K562 (cell line): ENCODE measurements at regions of chr7 and their contacts with region 1.

Region 1: GRCh38 chr7:50335795-50336754 is 31.6 kb downstream of the IKZF1 start:
- DNase-seq: peak; percentile 79 to 89 (median 85)
- ATAC-seq: peak; percentile 50
- H3K4me3 ChIP-seq: no peak overlapping the region
- H3K27ac ChIP-seq: peak overlapping the region; percentile 74
- H3K4me1 ChIP-seq: peaks cover 58 to 97% of the 10 kb centered on the region in 2 experiments
- H3K27me3 ChIP-seq: no peaks in the 10 kb centered on the region; a peak in 1 of 5 replicates
- CTCF ChIP-seq: peak; percentile 15 to 25 (median 19); a peak in 2 of 6 replicates
- EP300 ChIP-seq: no peak
- POLR2A ChIP-seq: no peak
- RAD21 ChIP-seq: no peak

Region 2: GRCh38 chr7:50056131-50056530 is 279.9 kb before region 1 on chr7:
- CTCF ChIA-PET with region 1: no interaction called
- POLR2A ChIA-PET with region 1: no interaction called
- in situ Hi-C with region 1: no loop called
- intact Hi-C with region 1: no loop called
- DNase-seq: no peak
- ATAC-seq: no peak
- H3K4me3 ChIP-seq: no peak overlapping the region
- H3K27ac ChIP-seq: no peak overlapping the region
- H3K4me1 ChIP-seq: no peaks in the 10 kb centered on the region
- H3K27me3 ChIP-seq: no peaks in the 10 kb centered on the region
- CTCF ChIP-seq: no peak
- EP300 ChIP-seq: no peak
- POLR2A ChIP-seq: no peak
- RAD21 ChIP-seq: no peak

Region 3: DNA sequence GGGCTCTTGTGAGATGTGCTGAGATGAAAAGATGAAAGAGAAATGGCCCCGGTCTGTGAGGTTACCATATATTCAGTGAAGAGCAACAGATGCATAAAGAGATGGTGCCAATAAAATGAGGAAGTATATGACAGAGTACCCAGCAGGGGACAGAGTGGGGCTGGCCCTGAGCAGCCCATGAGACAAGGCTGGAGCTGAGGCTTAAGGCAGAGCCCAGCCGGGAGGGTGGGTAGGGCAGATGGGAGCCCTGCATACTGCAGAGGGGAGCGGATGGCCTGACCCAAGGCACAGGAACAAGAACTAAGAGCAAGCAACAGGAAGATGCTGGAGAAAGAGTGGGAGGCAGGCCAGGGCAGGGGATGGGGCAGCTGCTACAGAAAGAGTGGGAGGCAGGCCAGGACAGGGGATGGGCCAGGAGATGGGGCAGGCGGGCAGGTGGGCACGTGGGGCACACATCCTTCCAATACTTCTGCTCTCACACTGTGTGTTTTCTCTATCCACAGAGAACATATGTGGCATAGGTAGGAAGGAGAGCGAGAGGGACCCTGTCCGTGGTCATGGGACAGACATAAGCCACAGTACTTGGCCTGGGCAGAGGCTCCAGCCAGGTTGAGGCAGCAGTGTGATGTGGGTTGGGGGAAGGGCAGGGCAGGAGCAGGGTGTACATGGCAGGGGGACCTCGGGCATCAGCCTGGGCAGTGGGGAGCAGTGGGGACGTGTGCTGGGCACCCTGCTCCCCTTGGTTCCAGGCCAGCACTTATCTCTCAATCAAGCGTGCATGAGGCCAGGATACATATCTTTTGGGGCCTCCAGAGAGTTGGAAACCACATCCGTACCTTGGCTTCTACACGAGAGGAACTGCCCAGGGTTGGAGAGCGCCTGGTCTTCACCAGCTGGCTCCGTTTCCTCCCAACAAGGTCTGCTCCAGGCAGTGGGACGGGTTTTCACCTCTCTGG is 123.1 kb before region 1 on chr7:
- CTCF ChIA-PET with region 1: no interaction called
- POLR2A ChIA-PET with region 1: no interaction called
- in situ Hi-C with region 1: no loop called
- intact Hi-C with region 1: no loop called
- DNase-seq: no peak
- ATAC-seq: peak; percentile 17; the same call in 2 of the 3 replicates
- H3K4me3 ChIP-seq: no peak overlapping the region
- H3K27ac ChIP-seq: no peak overlapping the region
- H3K4me1 ChIP-seq: peaks cover 10 to 15% of the 10 kb centered on the region in 2 experiments
- H3K27me3 ChIP-seq: peaks cover 0 to 9% of the 10 kb centered on the region in 2 experiments; a peak in 1 of 5 replicates
- CTCF ChIP-seq: peak in 1 of 3 experiments; percentile 16; a peak in 1 of 6 replicates
- EP300 ChIP-seq: no peak
- POLR2A ChIP-seq: no peak
- RAD21 ChIP-seq: 0 out of 4 replicates have a peak, but pooled peaks of 1 of the 2 experiments have one; percentile 3

Region 4: GRCh38 chr7:50315739-50316671 is 20.1 kb before region 1 on chr7:
- CTCF ChIA-PET with region 1: no interaction called
- POLR2A ChIA-PET with region 1: interaction called, 10 read pairs
- in situ Hi-C with region 1: no loop called
- intact Hi-C with region 1: no loop called
- DNase-seq: no peak
- ATAC-seq: peak; percentile 6; the same call in 2 of the 3 replicates
- H3K4me3 ChIP-seq: no peak overlapping the region
- H3K27ac ChIP-seq: no peak overlapping the region; the same call in 2 of the 3 replicates
- H3K4me1 ChIP-seq: peaks cover 19 to 48% of the 10 kb centered on the region in 2 experiments
- H3K27me3 ChIP-seq: no peaks in the 10 kb centered on the region
- CTCF ChIP-seq: no peak
- EP300 ChIP-seq: no peak
- POLR2A ChIP-seq: no peak
- RAD21 ChIP-seq: no peak; a peak in 1 of 4 replicates

Region 5: GRCh38 chr7:50349963-50350944 is 14.2 kb after region 1 on chr7:
- CTCF ChIA-PET with region 1: no interaction called
- POLR2A ChIA-PET with region 1: interaction called, 14 read pairs
- in situ Hi-C with region 1: no loop called
- intact Hi-C with region 1: loop called (anchors 1 kb)
- DNase-seq: peak in 2 of 4 experiments; percentile 35 to 69
- ATAC-seq: peak; percentile 78
- H3K4me3 ChIP-seq: no peak overlapping the region
- H3K27ac ChIP-seq: peak overlapping the region; percentile 38; the same call in 1 of the 3 replicates
- H3K4me1 ChIP-seq: peaks cover 21 to 56% of the 10 kb centered on the region in 2 experiments
- H3K27me3 ChIP-seq: no peaks in the 10 kb centered on the region
- CTCF ChIP-seq: no peak
- EP300 ChIP-seq: 0 out of 2 replicates have a peak, but pooled peaks have one; percentile 7
- POLR2A ChIP-seq: no peak
- RAD21 ChIP-seq: no peak

Region 6: DNA sequence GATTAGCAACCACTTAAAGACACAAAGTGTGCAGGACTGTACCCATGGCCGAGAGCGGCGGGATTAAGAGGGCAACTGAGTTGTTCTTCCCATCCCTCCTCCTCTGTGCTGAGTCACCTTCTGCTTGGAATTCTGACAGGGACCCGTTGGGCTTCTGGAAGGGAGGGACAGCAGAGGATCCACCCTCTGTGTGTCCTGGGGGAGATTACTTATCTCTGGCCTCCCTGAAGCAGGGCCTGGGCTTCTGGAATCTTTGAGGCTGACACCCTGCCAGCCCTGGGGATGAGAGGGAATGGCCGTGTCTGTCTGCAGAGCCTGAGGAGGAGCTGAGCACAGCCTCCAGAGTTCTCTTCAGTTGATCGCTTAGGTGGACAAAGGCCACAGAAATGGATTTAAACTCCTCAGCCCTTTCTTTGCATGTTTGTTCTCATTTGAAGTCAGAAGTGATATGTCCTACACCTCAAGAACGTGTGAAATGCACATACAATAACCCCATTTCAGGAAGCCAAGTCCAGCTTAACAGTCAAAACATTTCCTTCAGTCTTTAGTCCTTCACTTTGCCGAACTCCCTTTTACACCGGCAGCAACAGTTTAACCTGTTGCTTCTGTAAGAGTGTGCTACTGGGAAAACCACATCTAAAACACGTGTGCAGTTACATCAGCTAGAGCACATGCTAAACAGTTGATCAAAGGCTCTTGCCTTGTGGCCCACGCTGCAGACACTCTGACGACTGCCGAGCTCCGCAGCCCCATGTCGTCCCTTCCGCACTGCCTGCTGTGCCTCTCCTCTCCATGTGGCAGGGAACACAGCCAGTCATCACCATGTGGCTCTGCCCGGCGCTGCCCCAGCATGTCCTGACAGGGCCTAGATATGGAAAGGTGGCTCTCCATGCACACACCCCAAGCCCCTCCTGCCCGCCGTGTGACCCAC is 24.2 kb after region 1 on chr7:
- CTCF ChIA-PET with region 1: interaction called, 3 read pairs
- POLR2A ChIA-PET with region 1: interaction called, 4 read pairs
- in situ Hi-C with region 1: no loop called
- intact Hi-C with region 1: loop called (anchors 2 kb)
- DNase-seq: peak; percentile 83 to 88 (median 86)
- ATAC-seq: peak; percentile 64
- H3K4me3 ChIP-seq: no peak overlapping the region
- H3K27ac ChIP-seq: peak overlapping the region; percentile 77
- H3K4me1 ChIP-seq: peaks cover 49 to 72% of the 10 kb centered on the region in 2 experiments
- H3K27me3 ChIP-seq: no peaks in the 10 kb centered on the region
- CTCF ChIP-seq: no peak
- EP300 ChIP-seq: peak; percentile 86
- POLR2A ChIP-seq: no peak
- RAD21 ChIP-seq: peak in 1 of 2 experiments; percentile 15; a peak in 1 of 4 replicates